ENCODE measurements at regions of chr17 and their contacts with region 1.

Region 1: GRCh38 chr17:79304884-79305283 is 230.3 kb downstream of the ENGASE start:
- DNase-seq: no peak

Region 2: GRCh38 chr17:79252886-79253285 is 52.0 kb before region 1 on chr17:
- in situ Hi-C with region 1: no loop called
- DNase-seq: no peak

Region 3: GRCh38 chr17:79269620-79270019 is 35.3 kb before region 1 on chr17:
- in situ Hi-C with region 1: no loop called
- DNase-seq: no peak

Region 4: DNA sequence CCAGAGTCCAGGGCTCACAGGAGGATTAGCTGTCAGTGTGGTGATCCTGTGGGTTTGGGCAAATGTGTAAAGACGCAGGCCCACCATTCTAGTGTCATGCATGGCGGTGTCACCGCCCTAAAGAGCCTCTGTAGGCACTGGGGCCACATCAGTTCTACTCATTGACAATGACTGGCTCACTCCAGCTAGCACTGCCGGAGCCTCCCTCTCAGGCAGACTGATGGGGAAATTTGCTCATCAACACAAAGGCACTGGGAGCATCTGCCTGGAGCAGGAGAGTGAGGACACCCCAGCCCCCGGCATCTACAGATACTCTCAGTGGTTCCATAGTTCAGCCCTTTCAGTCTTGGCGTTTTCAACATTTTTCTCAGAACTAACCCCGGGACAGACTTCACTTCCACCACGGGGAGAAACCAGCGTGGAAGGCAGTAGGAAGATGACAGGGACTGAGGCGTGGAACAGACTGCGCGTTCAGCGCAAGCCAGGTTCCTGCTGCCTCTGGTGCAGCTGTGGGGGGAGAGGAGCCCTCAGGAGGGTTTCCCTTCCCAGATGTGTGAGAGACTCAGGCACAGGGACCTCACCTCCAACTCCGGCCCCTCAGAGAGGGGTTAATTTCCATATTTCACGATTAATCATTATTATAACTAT is 49.4 kb after region 1 on chr17:
- in situ Hi-C with region 1: loop called (anchors 5 kb)
- DNase-seq: no peak

Measured in G401 (cell line).